Naive thymus-derived CD4-positive, alpha-beta T cell (primary cell): ENCODE measurements at regions of chr14 and their contacts with region 1.

Region 1: DNA sequence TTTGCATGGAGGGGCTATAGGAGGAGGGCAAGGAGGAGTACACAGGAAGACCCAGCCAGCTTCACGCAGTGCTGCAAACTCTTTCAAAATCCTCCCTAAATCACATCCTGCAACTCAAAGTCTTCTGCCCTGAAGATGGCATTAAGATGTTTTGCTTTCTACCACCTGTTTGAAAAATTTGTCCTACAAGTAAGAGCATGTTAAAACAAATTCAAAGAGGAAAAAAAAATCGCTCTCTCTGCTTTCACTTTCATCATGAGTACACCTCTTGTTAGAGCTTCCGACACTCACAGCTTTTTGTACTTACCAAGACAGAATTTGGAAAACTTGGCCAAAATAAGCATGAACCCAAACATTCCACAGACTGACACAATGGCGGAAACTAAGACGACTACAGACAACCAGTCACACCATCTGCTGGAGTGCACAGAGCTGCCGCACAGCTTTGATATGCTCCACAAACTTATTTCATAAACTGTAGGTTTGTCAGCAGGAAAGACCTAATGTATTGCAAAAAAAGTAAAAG is 21.3 kb downstream of the GCH1 start:
- DNase-seq: peak in 7 of 9 donors; percentile 55 to 74 (median 72)
- ATAC-seq: peak; percentile 77
- H3K4me3 ChIP-seq: peak overlapping the region; percentile 70
- H3K4me3 Mint-ChIP-seq: peak overlapping the region; percentile 85 to 97 (median 90)
- H3K27ac ChIP-seq: peak overlapping the region; percentile 79
- H3K27ac Mint-ChIP-seq: peak overlapping the region; percentile 90 to 99 (median 96)
- H3K4me1 ChIP-seq: peaks cover 7 to 17% of the 10 kb centered on the region in 2 donors
- H3K4me1 Mint-ChIP-seq: peaks cover 28 to 66% (median 60%) of the 10 kb centered on the region in 7 donors
- H3K27me3 ChIP-seq: no peaks in the 10 kb centered on the region
- H3K27me3 Mint-ChIP-seq: no peaks in the 10 kb centered on the region

Region 2: DNA sequence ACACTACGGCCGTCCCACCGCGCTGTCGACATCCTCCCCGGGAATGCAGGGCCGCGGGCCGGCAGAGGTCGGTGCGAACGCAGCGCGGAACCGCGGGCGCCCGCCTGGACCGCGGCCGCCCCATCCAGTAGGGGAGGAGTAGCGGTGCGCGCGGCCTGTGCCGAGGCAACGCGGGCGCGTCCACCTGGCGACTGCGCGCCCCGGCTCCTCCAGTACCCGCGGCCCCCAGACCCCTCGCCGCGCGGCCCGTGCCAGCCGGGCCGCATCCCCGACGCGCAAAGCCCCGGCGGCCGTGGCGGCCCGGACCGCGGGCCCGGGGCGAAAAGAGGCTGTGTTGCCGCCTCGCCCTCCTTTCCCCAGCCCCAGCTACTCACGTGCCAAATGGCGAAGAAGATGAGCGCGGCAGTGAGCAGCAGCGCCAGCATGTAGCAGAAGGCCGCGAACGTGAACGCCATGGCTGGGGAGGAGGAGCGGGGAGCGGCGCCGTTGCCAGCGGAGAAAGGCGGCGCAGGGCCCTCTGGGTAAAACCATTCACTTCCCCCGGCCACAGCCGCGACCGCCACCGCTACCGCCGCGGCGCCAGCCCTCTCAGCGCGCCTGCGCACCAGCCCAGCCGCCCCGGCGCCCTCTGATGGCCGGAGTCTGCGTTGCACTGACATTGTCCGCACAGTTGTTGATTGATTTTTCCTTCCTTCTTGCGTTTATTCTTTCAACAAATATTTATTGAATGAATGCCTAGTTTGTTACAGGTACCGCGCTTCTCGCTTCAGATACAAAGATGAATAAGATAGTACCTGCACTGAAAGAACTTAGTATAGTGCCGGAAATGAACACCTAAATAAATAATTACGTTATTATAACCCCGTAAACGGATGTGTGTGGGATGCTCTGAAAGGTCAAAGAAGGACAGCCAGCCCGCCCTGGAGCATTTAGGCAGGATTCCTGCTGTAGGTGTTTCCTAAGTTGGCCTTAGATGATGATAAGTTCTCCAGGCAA is 440.1 kb before region 1 on chr14 and contains the start of gene CNIH1:
- CTCF ChIA-PET with region 1: no interaction called
- POLR2A ChIA-PET with region 1: no interaction called
- intact Hi-C with region 1: loop called in 1 of 2 experiments (anchors 5 kb)
- DNase-seq: peak; percentile 85 to 99 (median 93)
- ATAC-seq: peak; percentile 97
- H3K4me3 ChIP-seq: peak within 1 kb of the TSS; percentile 73
- H3K4me3 Mint-ChIP-seq: peak within 1 kb of the TSS; percentile 85 to 97 (median 94)
- H3K27ac ChIP-seq: peak within 1 kb of the TSS; percentile 80
- H3K27ac Mint-ChIP-seq: peak within 1 kb of the TSS; percentile 87 to 98 (median 95)
- H3K4me1 ChIP-seq: peaks cover 9 to 23% of the 10 kb centered on the region in 2 donors
- H3K4me1 Mint-ChIP-seq: peaks cover 23 to 54% (median 49%) of the 10 kb centered on the region in 7 donors
- H3K27me3 ChIP-seq: no peaks in the 10 kb centered on the region
- H3K27me3 Mint-ChIP-seq: peaks cover 0 to 2% (median 0%) of the 10 kb centered on the region in 5 donors
- total RNA-seq, gene CNIH1: 50.5 to 87.9 (median 57.8) TPM

Region 3: GRCh38 chr14:54805521-54806322 is 75.6 kb before region 1 on chr14:
- CTCF ChIA-PET with region 1: interaction called, 5 read pairs
- POLR2A ChIA-PET with region 1: no interaction called
- intact Hi-C with region 1: loop called in 1 of 2 experiments (anchors 1 kb)
- DNase-seq: peak; percentile 38 to 75 (median 56)
- ATAC-seq: peak; percentile 87
- H3K4me3 ChIP-seq: no peak overlapping the region
- H3K4me3 Mint-ChIP-seq: peak overlapping the region in 5 of 10 donors; percentile 20 to 58 (median 42)
- H3K27ac ChIP-seq: no peak overlapping the region
- H3K27ac Mint-ChIP-seq: peak overlapping the region in 1 of 9 donors; percentile 28
- H3K4me1 ChIP-seq: no peaks in the 10 kb centered on the region
- H3K4me1 Mint-ChIP-seq: peaks cover 0 to 6% (median 4%) of the 10 kb centered on the region in 7 donors
- H3K27me3 ChIP-seq: no peaks in the 10 kb centered on the region
- H3K27me3 Mint-ChIP-seq: peaks cover 10 to 27% (median 20%) of the 10 kb centered on the region in 5 donors

Region 4: GRCh38 chr14:54866588-54866987 is 14.7 kb before region 1 on chr14:
- CTCF ChIA-PET with region 1: interaction called, 4 read pairs
- POLR2A ChIA-PET with region 1: interaction called, 9 read pairs
- intact Hi-C with region 1: loop called in 1 of 2 experiments (anchors 1 kb)
- DNase-seq: no peak
- ATAC-seq: no peak
- H3K4me3 ChIP-seq: no peak overlapping the region
- H3K4me3 Mint-ChIP-seq: no peak overlapping the region
- H3K27ac ChIP-seq: no peak overlapping the region
- H3K27ac Mint-ChIP-seq: peak overlapping the region in 2 of 9 donors; percentile 12 to 56
- H3K4me1 ChIP-seq: no peaks in the 10 kb centered on the region
- H3K4me1 Mint-ChIP-seq: peaks cover 19 to 46% (median 33%) of the 10 kb centered on the region in 7 donors
- H3K27me3 ChIP-seq: no peaks in the 10 kb centered on the region
- H3K27me3 Mint-ChIP-seq: no peaks in the 10 kb centered on the region

Region 5: GRCh38 chr14:54893151-54893760 is 12.0 kb after region 1 on chr14:
- CTCF ChIA-PET with region 1: interaction called, 21 read pairs
- POLR2A ChIA-PET with region 1: interaction called, 8 read pairs
- intact Hi-C with region 1: loop called (anchors 1 kb)
- DNase-seq: peak in 6 of 9 donors; percentile 13 to 35 (median 26)
- ATAC-seq: peak; percentile 87
- H3K4me3 ChIP-seq: no peak overlapping the region
- H3K4me3 Mint-ChIP-seq: no peak overlapping the region
- H3K27ac ChIP-seq: no peak overlapping the region
- H3K27ac Mint-ChIP-seq: no peak overlapping the region
- H3K4me1 ChIP-seq: peaks cover 0 to 3% of the 10 kb centered on the region in 2 donors
- H3K4me1 Mint-ChIP-seq: peaks cover 32 to 60% (median 51%) of the 10 kb centered on the region in 7 donors
- H3K27me3 ChIP-seq: no peaks in the 10 kb centered on the region
- H3K27me3 Mint-ChIP-seq: no peaks in the 10 kb centered on the region

Region 6: DNA sequence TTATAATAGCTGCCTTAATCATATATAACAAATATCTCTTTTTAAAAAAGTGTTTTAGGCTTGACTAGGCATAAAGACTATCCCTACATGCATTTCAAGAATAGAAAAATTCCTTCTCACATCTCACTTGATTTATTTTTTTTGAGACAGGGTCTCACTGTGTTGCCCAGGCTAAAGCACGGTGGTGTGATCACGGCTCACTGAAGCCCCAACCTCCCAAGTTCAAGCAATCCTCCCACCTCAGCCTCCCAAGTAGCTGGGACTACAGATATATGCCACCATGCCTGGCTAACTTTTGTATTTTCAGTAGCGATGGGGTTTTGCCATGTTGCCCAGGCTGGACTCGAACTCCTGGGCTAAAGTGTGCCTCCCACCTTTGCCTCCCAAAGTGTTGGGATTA is 86.2 kb after region 1 on chr14:
- CTCF ChIA-PET with region 1: no interaction called
- POLR2A ChIA-PET with region 1: no interaction called
- intact Hi-C with region 1: no loop called
- DNase-seq: no peak
- ATAC-seq: no peak
- H3K4me3 ChIP-seq: no peak overlapping the region
- H3K4me3 Mint-ChIP-seq: no peak overlapping the region
- H3K27ac ChIP-seq: no peak overlapping the region
- H3K27ac Mint-ChIP-seq: no peak overlapping the region
- H3K4me1 ChIP-seq: no peaks in the 10 kb centered on the region
- H3K4me1 Mint-ChIP-seq: peaks cover 0 to 9% (median 0%) of the 10 kb centered on the region in 7 donors
- H3K27me3 ChIP-seq: no peaks in the 10 kb centered on the region
- H3K27me3 Mint-ChIP-seq: no peaks in the 10 kb centered on the region

Region 7: DNA sequence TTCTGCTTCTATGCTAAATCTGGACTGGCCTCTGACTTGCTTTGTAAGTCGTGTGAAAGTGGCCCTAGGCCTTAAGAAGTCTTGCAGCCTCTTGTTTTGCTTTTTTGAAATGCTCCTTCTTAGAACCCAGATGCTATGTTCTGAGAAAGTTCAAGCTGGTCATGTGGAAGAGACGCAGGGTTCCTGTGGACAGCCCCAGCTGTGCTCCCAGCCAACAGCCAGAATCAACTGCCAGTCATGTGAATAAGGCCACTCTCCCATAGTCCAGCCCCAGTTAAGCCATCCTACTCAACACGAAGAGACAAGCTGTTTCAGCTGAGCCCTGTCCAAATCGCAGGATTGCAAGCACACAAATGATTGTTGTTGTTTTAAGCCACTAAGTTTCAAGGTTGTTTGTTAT is 596.4 kb after region 1 on chr14:
- CTCF ChIA-PET with region 1: no interaction called
- POLR2A ChIA-PET with region 1: no interaction called
- intact Hi-C with region 1: no loop called
- DNase-seq: no peak
- ATAC-seq: no peak
- H3K4me3 ChIP-seq: no peak overlapping the region
- H3K4me3 Mint-ChIP-seq: no peak overlapping the region
- H3K27ac ChIP-seq: no peak overlapping the region
- H3K27ac Mint-ChIP-seq: no peak overlapping the region
- H3K4me1 ChIP-seq: no peaks in the 10 kb centered on the region
- H3K4me1 Mint-ChIP-seq: peaks cover 0 to 4% (median 0%) of the 10 kb centered on the region in 7 donors
- H3K27me3 ChIP-seq: no peaks in the 10 kb centered on the region
- H3K27me3 Mint-ChIP-seq: no peaks in the 10 kb centered on the region